Heart left ventricle (tissue), 16 donors: ENCODE measurements at regions of chr7 and their contacts with region 1.

Region 1: DNA sequence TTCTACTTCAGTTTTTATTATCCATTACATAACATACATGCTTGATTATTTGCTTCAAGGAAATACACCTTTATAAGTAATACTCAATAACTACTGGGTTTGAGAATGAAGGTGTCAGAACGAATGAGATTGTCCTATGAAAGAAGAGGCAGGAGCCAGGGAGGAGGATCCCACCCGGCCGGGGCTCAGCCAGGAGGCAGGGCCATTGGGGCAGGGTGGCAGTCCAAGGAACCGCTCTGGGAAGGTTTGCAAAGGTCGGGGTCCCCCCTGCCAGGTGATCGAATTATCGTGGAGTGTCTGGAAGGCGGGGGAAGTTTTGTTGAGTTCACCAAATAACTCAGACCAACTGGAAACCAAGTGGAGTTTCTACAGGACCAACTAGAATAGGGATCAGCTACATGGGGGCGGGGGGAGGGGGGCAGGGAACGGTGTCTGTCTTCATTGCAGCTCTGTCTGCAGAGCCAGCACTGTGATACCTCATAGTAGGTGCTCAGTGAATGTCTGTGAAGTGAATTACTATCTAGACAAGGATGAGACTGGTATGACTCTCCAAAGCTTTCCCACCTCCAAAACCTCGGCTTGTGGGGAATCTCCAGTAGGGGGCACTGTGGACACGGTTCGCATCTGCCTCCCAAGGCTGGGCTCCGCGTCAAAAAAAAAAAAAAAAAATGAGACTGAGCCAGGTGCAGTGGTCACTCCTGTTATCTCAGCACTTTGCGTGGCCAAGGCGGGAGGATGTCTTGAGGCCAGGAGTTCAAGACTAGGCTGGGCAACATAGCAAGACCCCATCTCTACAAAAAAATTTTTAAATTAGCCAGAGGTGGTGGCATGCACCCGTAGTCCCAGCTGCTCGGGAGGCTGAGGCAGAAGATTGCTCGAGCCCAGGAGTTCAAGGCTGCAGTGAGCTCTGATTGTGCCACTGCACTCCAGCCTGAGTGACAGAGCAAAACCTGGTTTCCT is 9.4 kb downstream of the TRIM56 start:
- DNase-seq: peak in 3 of 5 donors; percentile 42 to 66 (median 43)
- ATAC-seq: peak; percentile 38 to 72 (median 60)
- H3K4me3 ChIP-seq: no peak overlapping the region
- H3K27ac ChIP-seq: peak overlapping the region in 1 of 12 donors; percentile 13
- H3K4me1 ChIP-seq: peaks cover 0 to 23% (median 7%) of the 10 kb centered on the region in 12 donors
- H3K27me3 ChIP-seq: no peaks in the 10 kb centered on the region
- CTCF ChIP-seq: peak; percentile 50 to 76 (median 66)
- POLR2A ChIP-seq: no peak

Region 2: GRCh38 chr7:101169838-101170551 is 75.3 kb after region 1 on chr7:
- intact Hi-C with region 1: loop called in 1 of 10 experiments (anchors 2 kb)
- DNase-seq: peak; percentile 51 to 86 (median 71)
- ATAC-seq: peak in 3 of 4 donors; percentile 12 to 51 (median 41)
- H3K4me3 ChIP-seq: no peak overlapping the region
- H3K27ac ChIP-seq: no peak overlapping the region
- H3K4me1 ChIP-seq: peaks cover 0 to 55% (median 32%) of the 10 kb centered on the region in 12 donors
- H3K27me3 ChIP-seq: peaks cover 71 to 100% (median 96%) of the 10 kb centered on the region in 9 donors
- CTCF ChIP-seq: peak; percentile 77 to 88 (median 83)
- POLR2A ChIP-seq: no peak